PC-9 (cell line): ENCODE measurements at regions of chr3 and their contacts with region 1.

Region 1: GRCh38 chr3:126129181-126129891 is 45.4 kb upstream of the SLC41A3 start:
- DNase-seq: peak; percentile 91 to 96
- H3K4me3 ChIP-seq: peak overlapping the region; percentile 36; the same call in 1 of the 2 replicates
- H3K27ac ChIP-seq: peak overlapping the region; percentile 72
- H3K4me1 ChIP-seq: peaks cover 25% of the 10 kb centered on the region
- H3K27me3 ChIP-seq: no peaks in the 10 kb centered on the region
- CTCF ChIP-seq: peak; percentile 24; the same call in 1 of the 2 replicates

Region 2: GRCh38 chr3:125916376-125916978 is 212.9 kb before region 1 on chr3:
- CTCF ChIA-PET with region 1: no interaction called
- POLR2A ChIA-PET with region 1: no interaction called
- intact Hi-C with region 1: loop called (anchors 5 kb)
- DNase-seq: peak; percentile 88 to 99
- H3K4me3 ChIP-seq: peak overlapping the region; percentile 85
- H3K27ac ChIP-seq: peak overlapping the region; percentile 65
- H3K4me1 ChIP-seq: peaks cover 41% of the 10 kb centered on the region
- H3K27me3 ChIP-seq: no peaks in the 10 kb centered on the region
- CTCF ChIP-seq: no peak; the same call in 1 of the 2 replicates

Region 3: DNA sequence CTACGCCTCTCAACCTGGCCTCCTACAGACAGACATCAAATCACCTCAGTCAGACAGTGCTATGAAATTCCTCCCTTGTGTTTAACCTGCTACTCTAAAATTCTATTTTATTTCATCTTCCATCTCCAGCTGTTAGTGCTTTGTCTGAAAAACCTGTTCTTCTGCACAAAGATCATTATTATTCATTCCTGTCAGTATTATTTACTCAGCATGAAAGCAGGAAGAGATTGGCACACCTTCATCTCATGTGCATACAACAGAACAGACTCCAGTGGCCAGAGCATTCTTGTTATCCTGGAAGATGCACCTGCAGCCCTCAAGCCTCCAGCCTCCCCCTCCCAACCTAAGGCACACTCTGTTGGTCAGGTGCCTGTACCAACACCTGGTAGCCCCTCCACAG is 162.2 kb before region 1 on chr3:
- CTCF ChIA-PET with region 1: no interaction called
- POLR2A ChIA-PET with region 1: no interaction called
- intact Hi-C with region 1: loop called (anchors 5 kb)
- DNase-seq: peak; percentile 19 to 80
- H3K4me3 ChIP-seq: no peak overlapping the region
- H3K27ac ChIP-seq: no peak overlapping the region
- H3K4me1 ChIP-seq: peaks cover 19% of the 10 kb centered on the region
- H3K27me3 ChIP-seq: peaks cover 4% of the 10 kb centered on the region; the same call in 1 of the 2 replicates
- CTCF ChIP-seq: no peak

Region 4: GRCh38 chr3:126083913-126084767 is 45.2 kb before region 1 on chr3 and contains the start of gene SLC41A3:
- CTCF ChIA-PET with region 1: no interaction called
- POLR2A ChIA-PET with region 1: no interaction called
- intact Hi-C with region 1: loop called (anchors 2 kb)
- DNase-seq: peak; percentile 66 to 92
- H3K4me3 ChIP-seq: peak within 1 kb of the TSS; percentile 83
- H3K27ac ChIP-seq: no peak within 1 kb of the TSS
- H3K4me1 ChIP-seq: peaks cover 23% of the 10 kb centered on the region
- H3K27me3 ChIP-seq: no peaks in the 10 kb centered on the region
- CTCF ChIP-seq: peak; percentile 58; the same call in 1 of the 2 replicates
- total RNA-seq, gene SLC41A3: 59.2 and 67.0 TPM in 2 replicates

Region 5: DNA sequence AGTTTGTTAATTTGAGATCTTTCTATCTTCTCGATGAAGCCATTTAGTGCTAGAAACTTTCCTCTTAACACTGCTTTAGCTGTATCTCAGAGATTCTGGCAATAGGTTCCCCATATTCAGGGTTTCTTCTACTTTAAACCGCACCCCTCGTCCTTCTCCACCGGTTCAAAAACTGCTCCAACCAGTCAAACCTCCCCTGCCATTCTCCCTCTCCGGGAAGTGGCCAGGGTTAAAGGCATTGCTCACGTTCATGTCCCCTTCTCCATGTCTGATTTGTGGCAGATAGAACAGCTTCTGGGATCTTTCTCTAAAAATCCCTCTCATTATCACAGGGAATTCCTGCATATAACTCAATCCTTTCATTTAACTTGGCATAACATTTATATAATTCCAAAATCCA is 36.7 kb after region 1 on chr3:
- CTCF ChIA-PET with region 1: no interaction called
- POLR2A ChIA-PET with region 1: no interaction called
- intact Hi-C with region 1: loop called (anchors 2 kb)
- DNase-seq: peak; percentile 45 to 65
- H3K4me3 ChIP-seq: no peak overlapping the region
- H3K27ac ChIP-seq: no peak overlapping the region
- H3K4me1 ChIP-seq: peaks cover 18% of the 10 kb centered on the region; the same call in 1 of the 2 replicates
- H3K27me3 ChIP-seq: no peaks in the 10 kb centered on the region
- CTCF ChIP-seq: no peak

Region 6: GRCh38 chr3:126197854-126198584 is 68.7 kb after region 1 on chr3:
- CTCF ChIA-PET with region 1: interaction called, 6 read pairs
- POLR2A ChIA-PET with region 1: no interaction called
- intact Hi-C with region 1: loop called (anchors 1 kb)
- DNase-seq: peak; percentile 87 to 90
- H3K4me3 ChIP-seq: peak overlapping the region; percentile 59
- H3K27ac ChIP-seq: peak overlapping the region; percentile 83
- H3K4me1 ChIP-seq: 0 out of 2 replicates have a peak, but pooled peaks cover 5% of the 10 kb centered on the region
- H3K27me3 ChIP-seq: no peaks in the 10 kb centered on the region
- CTCF ChIP-seq: peak; percentile 81

Region 7: DNA sequence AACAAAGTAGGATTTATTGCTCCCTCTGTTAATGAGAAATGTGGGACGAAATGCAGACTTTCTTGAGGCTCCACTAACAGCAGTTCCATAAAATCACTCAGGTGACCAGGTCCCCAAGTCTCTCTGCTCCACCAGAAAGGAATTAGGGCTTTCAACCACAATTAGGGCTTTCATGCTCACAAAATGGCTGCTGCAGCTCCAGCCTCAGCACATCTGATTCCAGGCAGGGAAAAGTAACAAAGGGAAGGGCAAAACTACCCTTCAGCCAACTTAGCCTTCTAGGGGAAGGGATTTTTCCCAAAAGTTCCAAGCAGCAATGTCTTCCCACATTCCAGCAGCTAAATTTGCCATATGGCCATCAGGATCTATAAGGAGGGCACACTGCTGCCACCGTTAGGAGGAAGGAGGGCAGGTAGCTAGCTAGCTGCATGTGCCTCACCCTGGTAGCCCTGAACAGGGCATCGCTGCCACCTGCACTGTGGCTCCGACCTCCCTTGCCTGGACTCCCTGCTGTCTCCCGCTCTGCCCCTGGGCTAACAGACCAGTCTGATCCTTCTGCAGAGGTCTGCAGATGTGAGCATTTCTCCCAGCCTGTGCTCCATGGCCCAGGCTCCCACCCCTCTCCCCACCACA is 278.2 kb after region 1 on chr3:
- CTCF ChIA-PET with region 1: no interaction called
- POLR2A ChIA-PET with region 1: no interaction called
- intact Hi-C with region 1: no loop called
- DNase-seq: no peak
- H3K4me3 ChIP-seq: no peak overlapping the region
- H3K27ac ChIP-seq: no peak overlapping the region
- H3K4me1 ChIP-seq: no peaks in the 10 kb centered on the region
- H3K27me3 ChIP-seq: peaks cover 27% of the 10 kb centered on the region; the same call in 1 of the 2 replicates
- CTCF ChIP-seq: no peak; the same call in 1 of the 2 replicates